ENCODE measurements at regions of chr10 and their contacts with region 1.

Region 1: GRCh38 chr10:72331601-72332422 is 22.9 kb downstream of the DNAJB12 start:
- DNase-seq: peak; percentile 85 to 98 (median 92)
- ATAC-seq: peak; percentile 70
- H3K4me3 ChIP-seq: peak overlapping the region; percentile 2 to 31
- H3K4me3 Mint-ChIP-seq: peak overlapping the region; percentile 77
- H3K27ac ChIP-seq: peak overlapping the region; percentile 44 to 69
- H3K27ac Mint-ChIP-seq: peak overlapping the region; percentile 99
- H3K4me1 ChIP-seq: peaks cover 94% of the 10 kb centered on the region
- H3K4me1 Mint-ChIP-seq: peaks cover 91% of the 10 kb centered on the region
- H3K27me3 ChIP-seq: no peaks in the 10 kb centered on the region
- H3K27me3 Mint-ChIP-seq: no peaks in the 10 kb centered on the region
- CTCF ChIP-seq: peak; percentile 28

Region 2: DNA sequence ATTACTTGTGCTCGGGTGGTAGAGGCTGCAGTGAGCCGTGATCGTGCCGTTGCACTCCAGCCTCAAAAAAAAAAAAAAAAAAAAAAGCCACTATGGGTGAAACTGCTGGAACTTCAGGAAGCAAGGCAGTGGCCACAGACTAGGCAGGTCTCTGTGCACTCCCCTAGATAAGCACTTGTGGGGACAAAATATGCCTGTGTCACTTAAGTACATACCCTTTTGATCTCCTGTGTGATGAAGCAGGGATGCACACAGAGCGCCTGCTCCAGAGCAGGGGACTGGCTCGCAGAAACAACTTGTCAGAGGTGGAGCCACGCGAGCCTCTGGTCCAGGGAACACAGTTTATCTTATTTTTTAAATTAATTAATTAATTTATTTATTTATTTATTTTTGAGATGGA is 437.9 kb before region 1 on chr10:
- CTCF ChIA-PET with region 1: interaction called, 31 read pairs
- POLR2A ChIA-PET with region 1: no interaction called
- intact Hi-C with region 1: no loop called
- DNase-seq: no peak
- ATAC-seq: no peak
- H3K4me3 ChIP-seq: no peak overlapping the region
- H3K4me3 Mint-ChIP-seq: no peak overlapping the region
- H3K27ac ChIP-seq: no peak overlapping the region
- H3K27ac Mint-ChIP-seq: no peak overlapping the region
- H3K4me1 ChIP-seq: peaks cover 5% of the 10 kb centered on the region
- H3K4me1 Mint-ChIP-seq: peaks cover 4% of the 10 kb centered on the region
- H3K27me3 ChIP-seq: no peaks in the 10 kb centered on the region
- H3K27me3 Mint-ChIP-seq: peaks cover 4% of the 10 kb centered on the region
- CTCF ChIP-seq: no peak

Region 3: GRCh38 chr10:72126184-72126871 is 205.5 kb before region 1 on chr10:
- CTCF ChIA-PET with region 1: interaction called, 84 read pairs
- POLR2A ChIA-PET with region 1: interaction called, 3 read pairs
- intact Hi-C with region 1: no loop called
- DNase-seq: peak in 2 of 9 experiments; percentile 43 to 57
- ATAC-seq: no peak
- H3K4me3 ChIP-seq: no peak overlapping the region
- H3K4me3 Mint-ChIP-seq: no peak overlapping the region
- H3K27ac ChIP-seq: no peak overlapping the region
- H3K27ac Mint-ChIP-seq: no peak overlapping the region
- H3K4me1 ChIP-seq: peaks cover 12% of the 10 kb centered on the region
- H3K4me1 Mint-ChIP-seq: peaks cover 29% of the 10 kb centered on the region
- H3K27me3 ChIP-seq: no peaks in the 10 kb centered on the region
- H3K27me3 Mint-ChIP-seq: no peaks in the 10 kb centered on the region
- CTCF ChIP-seq: no peak

Region 4: DNA sequence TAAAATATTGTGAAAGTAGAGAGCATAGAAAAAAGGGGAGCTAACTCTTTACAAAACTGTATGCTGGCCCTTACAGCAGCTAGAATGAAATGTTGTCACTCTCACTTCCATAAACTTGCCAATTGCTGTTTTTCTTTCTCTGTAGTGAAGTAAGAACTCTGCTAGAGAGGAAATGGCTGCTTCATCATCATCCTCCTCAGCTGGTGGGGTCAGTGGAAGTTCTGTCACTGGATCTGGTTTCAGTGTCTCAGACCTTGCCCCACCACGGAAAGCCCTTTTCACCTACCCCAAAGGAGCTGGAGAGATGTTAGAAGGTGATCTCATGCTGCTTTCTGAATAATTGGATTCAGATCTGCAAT is 108.1 kb before region 1 on chr10:
- CTCF ChIA-PET with region 1: interaction called, 30 read pairs
- POLR2A ChIA-PET with region 1: interaction called, 7 read pairs
- intact Hi-C with region 1: loop called in 1 of 2 experiments (anchors 1 kb)
- DNase-seq: no peak
- ATAC-seq: no peak
- H3K4me3 ChIP-seq: no peak overlapping the region
- H3K4me3 Mint-ChIP-seq: no peak overlapping the region
- H3K27ac ChIP-seq: no peak overlapping the region
- H3K27ac Mint-ChIP-seq: peak overlapping the region; percentile 39
- H3K4me1 ChIP-seq: peaks cover 61% of the 10 kb centered on the region
- H3K4me1 Mint-ChIP-seq: peaks cover 59% of the 10 kb centered on the region
- H3K27me3 ChIP-seq: no peaks in the 10 kb centered on the region
- H3K27me3 Mint-ChIP-seq: no peaks in the 10 kb centered on the region
- CTCF ChIP-seq: no peak

Region 5: GRCh38 chr10:72260588-72261322 is 71.1 kb before region 1 on chr10:
- CTCF ChIA-PET with region 1: interaction called, 30 read pairs
- POLR2A ChIA-PET with region 1: interaction called, 3 read pairs
- intact Hi-C with region 1: loop called in 1 of 2 experiments (anchors 1 kb)
- DNase-seq: peak; percentile 61 to 94 (median 84)
- ATAC-seq: peak; percentile 77
- H3K4me3 ChIP-seq: peak overlapping the region; percentile 56 to 69
- H3K4me3 Mint-ChIP-seq: peak overlapping the region; percentile 81
- H3K27ac ChIP-seq: peak overlapping the region; percentile 51 to 83
- H3K27ac Mint-ChIP-seq: peak overlapping the region; percentile 97
- H3K4me1 ChIP-seq: peaks cover 69% of the 10 kb centered on the region
- H3K4me1 Mint-ChIP-seq: peaks cover 69% of the 10 kb centered on the region
- H3K27me3 ChIP-seq: no peaks in the 10 kb centered on the region
- H3K27me3 Mint-ChIP-seq: no peaks in the 10 kb centered on the region
- CTCF ChIP-seq: no peak

Region 6: DNA sequence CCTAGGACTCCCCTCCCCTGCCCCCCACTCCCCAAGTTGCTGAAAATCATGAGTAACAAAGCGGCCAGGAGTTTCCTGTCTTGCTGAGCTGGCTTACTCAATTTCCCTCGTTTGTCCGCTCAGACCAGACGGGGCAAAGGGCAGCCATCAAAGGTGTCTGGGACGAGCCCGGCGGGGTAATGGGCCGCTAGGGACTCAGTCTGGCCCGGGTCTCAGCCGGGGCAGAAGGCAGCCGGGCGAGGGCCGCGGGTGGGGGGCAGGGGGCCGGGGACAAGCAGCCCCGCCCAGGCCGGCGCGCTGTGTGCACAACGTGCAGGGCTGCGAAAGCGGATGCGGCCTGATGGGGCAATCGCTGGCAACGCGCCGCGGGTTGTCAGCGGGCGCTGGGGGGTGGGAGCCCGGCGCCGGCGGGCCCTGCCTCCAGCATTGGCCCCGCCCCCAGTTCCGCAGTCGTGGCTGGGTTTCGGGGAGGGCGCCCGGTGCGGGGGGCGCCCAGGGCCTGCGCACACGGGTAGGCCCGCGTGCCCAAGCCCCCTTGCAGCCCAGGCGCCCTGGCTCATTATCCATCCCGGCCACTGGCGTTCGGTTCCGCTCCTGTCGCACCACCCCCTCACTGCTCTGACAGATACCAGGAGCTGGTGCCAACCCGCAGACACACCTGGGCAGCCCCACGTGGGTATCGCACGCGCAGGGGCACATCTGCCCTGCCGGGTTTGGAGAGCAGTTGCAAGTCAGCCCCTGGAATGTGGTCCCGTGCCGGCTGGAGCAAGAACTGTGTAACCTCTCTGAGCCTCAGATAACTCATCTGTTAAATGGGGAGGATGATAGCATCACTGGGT is 12.2 kb before region 1 on chr10:
- CTCF ChIA-PET with region 1: interaction called, 42 read pairs
- POLR2A ChIA-PET with region 1: interaction called, 42 read pairs
- intact Hi-C with region 1: loop called (anchors 1 kb)
- DNase-seq: peak; percentile 75 to 95 (median 88)
- ATAC-seq: peak; percentile 67
- H3K4me3 ChIP-seq: peak overlapping the region; percentile 49 to 59
- H3K4me3 Mint-ChIP-seq: peak overlapping the region; percentile 74
- H3K27ac ChIP-seq: peak overlapping the region; percentile 87 to 88
- H3K27ac Mint-ChIP-seq: peak overlapping the region; percentile 98
- H3K4me1 ChIP-seq: peaks cover 92% of the 10 kb centered on the region
- H3K4me1 Mint-ChIP-seq: peaks cover 85% of the 10 kb centered on the region
- H3K27me3 ChIP-seq: no peaks in the 10 kb centered on the region
- H3K27me3 Mint-ChIP-seq: no peaks in the 10 kb centered on the region
- CTCF ChIP-seq: no peak

Measured in CD8-positive, alpha-beta T cell (primary cell).